Pancreas (tissue), 10 donors: ENCODE measurements at regions of chr5 and their contacts with region 1.

Region 1: DNA sequence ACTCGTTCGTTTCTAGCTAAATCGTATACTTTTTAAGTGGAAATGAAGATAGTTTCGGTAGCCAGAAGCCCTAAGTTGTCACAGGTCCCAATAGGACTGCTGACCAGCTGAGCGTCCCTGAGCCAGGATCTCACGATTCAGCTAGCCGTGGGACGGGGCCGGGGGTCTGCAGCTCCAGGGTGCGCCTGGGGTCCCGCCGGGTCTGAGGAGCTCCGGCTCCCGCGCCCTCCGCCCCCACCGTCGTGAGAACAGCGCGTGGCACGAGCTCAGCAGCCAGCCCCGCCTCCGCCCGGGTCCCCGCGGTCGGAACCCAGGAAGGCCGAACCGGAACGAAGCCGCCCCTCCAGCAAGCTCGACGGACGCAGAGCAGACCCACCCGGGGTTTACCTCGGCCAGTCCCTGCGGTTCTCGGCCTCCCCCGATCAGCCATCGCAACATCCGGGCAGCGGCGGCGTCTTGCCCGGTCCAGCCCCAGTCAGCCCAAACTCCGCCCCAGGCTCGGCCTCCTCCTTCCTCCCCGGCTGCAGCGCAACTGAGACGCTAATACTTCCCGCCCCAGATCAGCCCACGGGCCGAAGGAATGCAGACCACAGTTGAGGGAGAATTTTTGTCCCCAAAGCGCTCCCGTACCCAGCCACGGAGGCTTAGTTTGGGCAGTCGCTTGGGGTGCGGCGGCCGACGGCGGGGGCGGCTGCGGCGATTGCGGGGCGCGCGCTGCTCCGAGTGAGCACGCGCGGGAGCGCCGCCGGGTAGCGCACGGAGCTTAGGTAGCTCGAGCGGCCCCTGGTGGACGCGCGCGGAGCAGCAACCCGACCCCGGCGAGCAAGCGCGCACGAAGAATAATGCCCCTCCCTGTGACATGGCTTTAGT is at the start of gene WDR41:
- DNase-seq: peak; percentile 87 to 97 (median 92)
- ATAC-seq: peak; percentile 92 to 95 (median 94)
- H3K4me3 ChIP-seq: peak within 1 kb of the TSS; percentile 51 to 82 (median 72)
- H3K27ac ChIP-seq: peak within 1 kb of the TSS; percentile 84 to 93 (median 88)
- H3K4me1 ChIP-seq: peaks cover 4 to 9% (median 5%) of the 10 kb centered on the region in 3 donors
- H3K27me3 ChIP-seq: no peaks in the 10 kb centered on the region
- CTCF ChIP-seq: peak; percentile 90 to 97 (median 94)
- total RNA-seq, gene WDR41: 13.9 to 27.4 (median 19.1) TPM

Region 2: GRCh38 chr5:77143998-77144836 is 347.8 kb before region 1 on chr5:
- intact Hi-C with region 1: loop called in 1 of 3 experiments (anchors 10 kb)
- DNase-seq: peak; percentile 55 to 79 (median 72)
- ATAC-seq: peak; percentile 75 to 99 (median 97)
- H3K4me3 ChIP-seq: no peak overlapping the region
- H3K27ac ChIP-seq: no peak overlapping the region
- H3K4me1 ChIP-seq: no peaks in the 10 kb centered on the region
- H3K27me3 ChIP-seq: no peaks in the 10 kb centered on the region
- CTCF ChIP-seq: peak; percentile 52 to 79 (median 73)